Spleen (tissue), 13 donors: ENCODE measurements at regions of chr13 and their contacts with region 1.

Region 1: GRCh38 chr13:48595431-48596429 is 58.0 kb upstream of the CYSLTR2 start:
- DNase-seq: no peak
- H3K4me3 ChIP-seq: no peak overlapping the region
- H3K27ac ChIP-seq: no peak overlapping the region
- H3K4me1 ChIP-seq: peaks cover 0 to 7% (median 0%) of the 10 kb centered on the region in 6 donors
- H3K27me3 ChIP-seq: peaks cover 0 to 4% (median 0%) of the 10 kb centered on the region in 7 donors
- CTCF ChIP-seq: peak; percentile 32 to 83 (median 59)
- POLR2A ChIP-seq: no peak

Region 2: GRCh38 chr13:48731957-48732569 is 136.3 kb after region 1 on chr13:
- intact Hi-C with region 1: loop called (anchors 10 kb)
- DNase-seq: peak; percentile 87
- H3K4me3 ChIP-seq: peak overlapping the region in 2 of 8 donors; percentile 6 to 51
- H3K27ac ChIP-seq: no peak overlapping the region
- H3K4me1 ChIP-seq: peaks cover 0 to 8% (median 2%) of the 10 kb centered on the region in 6 donors
- H3K27me3 ChIP-seq: no peaks in the 10 kb centered on the region
- CTCF ChIP-seq: peak in 9 of 11 experiments; percentile 51 to 85 (median 76)
- POLR2A ChIP-seq: no peak

Region 3: DNA sequence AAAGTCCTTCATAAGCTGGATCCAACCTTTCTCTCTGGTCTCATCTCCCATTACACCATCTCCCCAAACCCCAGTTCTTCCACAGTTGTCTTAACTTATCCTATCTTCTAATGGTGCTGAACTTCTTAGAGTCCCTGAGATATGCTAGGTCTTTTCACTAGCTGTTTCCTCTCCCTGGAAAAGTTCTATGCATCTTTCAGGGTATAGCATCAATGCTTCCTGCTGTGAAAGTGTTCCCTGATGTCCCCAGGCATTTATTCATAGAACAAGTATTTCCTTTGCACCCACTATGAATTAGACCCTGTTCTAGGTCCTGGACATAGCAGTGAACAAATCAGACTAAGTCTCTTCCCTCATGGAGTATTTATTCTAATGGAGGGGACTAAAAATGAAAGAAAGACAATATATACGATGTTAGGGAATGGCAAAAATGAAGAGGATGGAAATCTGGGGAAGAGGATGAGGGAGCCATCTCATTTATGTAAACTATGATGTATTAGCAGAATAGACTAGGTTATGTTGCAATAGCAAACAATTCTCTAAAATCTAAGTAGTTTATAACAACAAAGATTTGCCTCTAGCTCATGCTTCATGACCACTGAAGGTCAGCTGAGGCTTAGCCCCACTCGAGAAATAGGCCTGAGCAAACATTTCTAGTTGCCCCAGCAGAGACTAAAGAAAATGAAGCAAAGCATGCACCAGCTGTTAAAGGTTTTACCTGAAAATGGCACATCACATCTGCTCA is 178.0 kb after region 1 on chr13:
- intact Hi-C with region 1: loop called (anchors 5 kb)
- DNase-seq: no peak
- H3K4me3 ChIP-seq: no peak overlapping the region
- H3K27ac ChIP-seq: no peak overlapping the region
- H3K4me1 ChIP-seq: peaks cover 0 to 7% (median 0%) of the 10 kb centered on the region in 6 donors
- H3K27me3 ChIP-seq: no peaks in the 10 kb centered on the region
- CTCF ChIP-seq: no peak
- POLR2A ChIP-seq: no peak